ENCODE measurements at regions of chr7 and their contacts with region 1.

Region 1: GRCh38 chr7:26291699-26292538 is at the start of gene SNX10:
- DNase-seq: peak; percentile 90
- ATAC-seq: peak; percentile 78
- H3K4me3 ChIP-seq: peak within 1 kb of the TSS; percentile 89 to 96 (median 90)
- H3K4me3 Mint-ChIP-seq: peak within 1 kb of the TSS; percentile 94
- H3K27ac ChIP-seq: peak within 1 kb of the TSS; percentile 60 to 82
- H3K27ac Mint-ChIP-seq: peak within 1 kb of the TSS; percentile 96
- H3K4me1 ChIP-seq: peaks cover 42 to 50% of the 10 kb centered on the region in 2 donors
- H3K4me1 Mint-ChIP-seq: peaks cover 45% of the 10 kb centered on the region
- H3K27me3 ChIP-seq: no peaks in the 10 kb centered on the region
- H3K27me3 Mint-ChIP-seq: no peaks in the 10 kb centered on the region
- CTCF ChIP-seq: peak; percentile 46
- total RNA-seq, gene SNX10: 26.5 and 33.6 TPM in 2 replicates

Region 2: DNA sequence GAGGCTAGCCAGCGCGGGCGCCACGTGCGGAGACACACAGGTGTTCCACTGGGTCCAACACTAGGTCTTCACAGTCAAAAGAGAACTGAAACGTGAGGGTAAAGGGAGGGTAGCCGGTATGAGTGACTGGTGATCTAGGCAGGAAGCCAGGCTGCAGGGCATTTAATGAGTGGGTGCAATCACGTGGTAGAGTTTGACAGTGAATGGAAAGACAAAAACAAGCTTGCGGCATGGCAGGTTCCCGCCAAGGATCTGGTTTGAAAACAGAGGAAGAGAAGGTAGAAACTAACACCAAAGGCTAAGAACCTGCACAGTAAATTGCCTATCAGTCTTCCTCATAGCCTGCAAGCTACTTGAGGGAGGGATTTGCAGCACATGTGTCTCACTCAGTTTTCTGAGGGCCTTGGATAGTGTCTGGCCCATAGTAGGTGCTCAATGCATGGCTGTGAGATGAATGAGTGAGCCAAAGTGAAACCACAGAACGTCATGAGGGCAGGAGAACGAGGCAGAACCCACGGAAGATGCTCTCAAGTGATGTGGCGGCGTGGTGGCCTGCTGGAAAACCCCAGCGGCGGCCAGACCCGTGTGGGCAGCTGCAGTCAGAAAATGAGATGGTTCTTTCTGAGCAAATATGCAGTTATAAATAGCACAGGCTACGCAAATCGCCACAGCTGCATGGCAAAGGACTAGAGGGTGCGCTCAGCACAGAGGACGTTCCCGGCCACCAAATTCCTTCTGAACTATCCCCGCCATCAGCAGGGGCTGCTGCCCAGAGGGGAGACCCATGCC is 323.5 kb before region 1 on chr7:
- CTCF ChIA-PET with region 1: no interaction called
- POLR2A ChIA-PET with region 1: no interaction called
- intact Hi-C with region 1: loop called (anchors 5 kb)
- DNase-seq: peak; percentile 80
- ATAC-seq: peak; percentile 84
- H3K4me3 ChIP-seq: peak overlapping the region in 3 of 5 experiments; percentile 8 to 37 (median 28)
- H3K4me3 Mint-ChIP-seq: peak overlapping the region; percentile 78
- H3K27ac ChIP-seq: peak overlapping the region; percentile 57 to 75
- H3K27ac Mint-ChIP-seq: peak overlapping the region; percentile 83
- H3K4me1 ChIP-seq: peaks cover 30 to 42% of the 10 kb centered on the region in 2 donors
- H3K4me1 Mint-ChIP-seq: peaks cover 39% of the 10 kb centered on the region
- H3K27me3 ChIP-seq: peaks cover 0 to 23% (median 8%) of the 10 kb centered on the region in 4 experiments
- H3K27me3 Mint-ChIP-seq: peaks cover 16% of the 10 kb centered on the region
- CTCF ChIP-seq: no peak

Region 3: DNA sequence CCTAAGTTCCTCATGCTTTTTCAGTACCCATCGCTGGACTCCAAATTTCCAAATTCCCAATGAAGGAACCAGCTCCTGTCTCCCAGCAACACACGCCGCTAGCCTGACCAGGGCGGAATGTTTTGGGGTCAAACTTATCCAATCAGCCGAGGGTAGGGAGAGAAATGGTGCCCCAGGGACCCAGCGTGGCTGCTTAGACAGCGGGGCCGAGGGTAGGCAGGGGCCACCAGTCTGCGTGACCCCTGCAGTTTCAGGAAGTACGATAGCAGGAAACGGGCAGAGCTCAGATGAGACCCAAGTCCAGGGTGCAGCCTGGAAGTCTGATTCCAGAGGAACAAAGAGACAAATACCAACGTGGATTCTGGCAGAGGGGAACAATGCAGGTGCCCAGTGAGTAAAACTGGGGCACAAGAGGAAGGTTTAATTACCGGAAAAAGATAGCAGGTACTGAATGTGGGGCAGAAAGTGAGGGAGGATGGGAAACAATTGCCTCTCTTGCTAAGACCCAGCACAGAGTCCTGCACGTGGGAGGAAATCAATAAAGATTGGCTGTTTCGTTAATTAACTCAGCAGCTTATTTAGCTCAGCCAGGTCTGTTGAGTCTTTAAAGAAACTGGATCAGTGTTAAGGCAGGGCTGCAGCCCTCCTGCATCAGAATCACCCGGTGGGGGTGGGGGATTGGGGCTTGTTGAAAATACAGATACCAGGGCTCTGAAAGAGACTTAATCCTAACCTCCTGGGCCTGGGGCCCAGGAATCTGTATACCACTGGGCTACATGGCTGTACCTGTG is 190.4 kb before region 1 on chr7:
- CTCF ChIA-PET with region 1: no interaction called
- POLR2A ChIA-PET with region 1: no interaction called
- intact Hi-C with region 1: loop called (anchors 5 kb)
- DNase-seq: peak; percentile 62
- ATAC-seq: peak; percentile 64
- H3K4me3 ChIP-seq: peak overlapping the region; percentile 42 to 85 (median 75)
- H3K4me3 Mint-ChIP-seq: peak overlapping the region; percentile 99
- H3K27ac ChIP-seq: peak overlapping the region; percentile 43 to 77
- H3K27ac Mint-ChIP-seq: peak overlapping the region; percentile 96
- H3K4me1 ChIP-seq: peaks cover 30 to 48% of the 10 kb centered on the region in 2 donors
- H3K4me1 Mint-ChIP-seq: peaks cover 45% of the 10 kb centered on the region
- H3K27me3 ChIP-seq: no peaks in the 10 kb centered on the region
- H3K27me3 Mint-ChIP-seq: no peaks in the 10 kb centered on the region
- CTCF ChIP-seq: no peak

Region 4: GRCh38 chr7:26305463-26306273 is 13.7 kb after region 1 on chr7:
- CTCF ChIA-PET with region 1: interaction called, 14 read pairs
- POLR2A ChIA-PET with region 1: interaction called, 6 read pairs
- intact Hi-C with region 1: no loop called
- DNase-seq: peak; percentile 47
- ATAC-seq: peak; percentile 31
- H3K4me3 ChIP-seq: peak overlapping the region in 3 of 5 experiments; percentile 3 to 15 (median 6)
- H3K4me3 Mint-ChIP-seq: peak overlapping the region; percentile 53
- H3K27ac ChIP-seq: peak overlapping the region; percentile 69 to 86
- H3K27ac Mint-ChIP-seq: peak overlapping the region; percentile 81
- H3K4me1 ChIP-seq: peaks cover 17 to 43% of the 10 kb centered on the region in 2 donors
- H3K4me1 Mint-ChIP-seq: peaks cover 62% of the 10 kb centered on the region
- H3K27me3 ChIP-seq: no peaks in the 10 kb centered on the region
- H3K27me3 Mint-ChIP-seq: no peaks in the 10 kb centered on the region
- CTCF ChIP-seq: no peak

Region 5: DNA sequence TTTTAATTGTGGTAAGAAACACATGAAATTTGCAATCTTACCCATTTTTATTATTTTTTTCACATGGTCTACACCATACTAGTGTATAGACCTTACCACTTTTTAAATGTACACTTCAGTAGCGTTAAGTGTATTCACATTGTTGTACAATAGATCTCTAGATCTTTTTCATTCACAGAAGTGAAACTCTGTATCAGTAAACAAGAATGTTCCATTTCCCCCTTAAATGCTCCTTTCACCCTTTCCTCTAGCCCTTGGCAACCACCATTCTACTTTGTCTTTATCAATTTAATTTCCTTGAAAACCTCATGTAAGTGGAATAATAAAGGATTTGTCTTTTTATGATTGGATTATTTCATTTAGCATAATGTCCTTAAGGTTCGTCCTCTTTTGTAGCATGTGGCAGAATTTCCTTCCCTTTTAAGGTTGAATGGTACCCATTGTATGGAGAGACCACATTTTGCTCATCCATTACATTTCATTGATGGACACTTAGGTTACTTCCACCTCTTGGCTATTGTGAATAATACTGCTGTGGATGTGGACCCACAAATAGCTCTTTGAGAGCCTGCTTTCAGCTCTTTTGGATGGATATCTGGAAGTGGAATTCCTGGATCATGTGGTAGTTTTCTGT is 45.4 kb after region 1 on chr7:
- CTCF ChIA-PET with region 1: interaction called, 8 read pairs
- POLR2A ChIA-PET with region 1: interaction called, 3 read pairs
- intact Hi-C with region 1: loop called (anchors 1 kb)
- DNase-seq: peak; percentile 55
- ATAC-seq: peak; percentile 62
- H3K4me3 ChIP-seq: peak overlapping the region in 1 of 5 experiments; percentile 57
- H3K4me3 Mint-ChIP-seq: peak overlapping the region; percentile 78
- H3K27ac ChIP-seq: peak overlapping the region; percentile 36 to 68
- H3K27ac Mint-ChIP-seq: peak overlapping the region; percentile 91
- H3K4me1 ChIP-seq: peaks cover 70 to 80% of the 10 kb centered on the region in 2 donors
- H3K4me1 Mint-ChIP-seq: peaks cover 66% of the 10 kb centered on the region
- H3K27me3 ChIP-seq: no peaks in the 10 kb centered on the region
- H3K27me3 Mint-ChIP-seq: no peaks in the 10 kb centered on the region
- CTCF ChIP-seq: no peak

Region 6: DNA sequence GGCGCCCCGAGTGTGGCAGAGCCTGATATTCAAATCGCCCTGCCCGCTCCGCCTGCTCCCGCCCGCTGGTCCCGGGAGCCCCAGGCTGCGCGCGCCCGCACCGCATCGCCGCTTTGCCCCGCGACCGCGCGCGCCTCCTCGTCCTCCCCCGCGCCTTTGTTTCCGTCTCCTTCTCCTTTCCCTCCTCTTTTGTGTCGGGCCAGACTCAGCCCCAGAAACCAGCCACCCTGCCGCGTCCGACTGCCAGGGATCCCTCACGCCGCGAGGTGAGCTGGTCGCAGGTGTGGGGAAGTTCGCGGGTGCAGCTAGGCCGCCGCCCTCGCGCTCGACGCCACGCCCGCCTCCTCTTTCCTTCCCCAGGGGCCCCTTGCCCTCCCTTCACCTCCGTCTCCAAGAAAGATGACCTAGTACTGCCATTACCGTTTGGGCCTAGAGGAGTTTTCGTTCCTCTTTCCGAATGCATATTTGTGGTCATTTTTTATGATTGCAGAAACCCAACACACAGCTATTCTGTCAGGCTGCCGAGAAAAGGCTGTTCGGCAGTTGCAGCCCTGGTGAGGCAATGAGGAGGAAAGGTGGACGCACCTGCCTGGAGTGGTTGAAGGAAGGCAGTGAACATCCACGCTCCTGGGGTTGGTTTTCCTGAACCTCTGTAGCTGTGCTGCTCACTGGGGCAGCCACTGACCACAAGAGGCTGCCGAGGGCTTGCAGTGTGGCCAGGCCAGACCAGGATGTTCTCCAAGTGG is 107.0 kb after region 1 on chr7:
- CTCF ChIA-PET with region 1: no interaction called
- POLR2A ChIA-PET with region 1: interaction called, 3 read pairs
- intact Hi-C with region 1: loop called (anchors 1 kb)
- DNase-seq: peak; percentile 95
- ATAC-seq: peak; percentile 86
- H3K4me3 ChIP-seq: peak overlapping the region in 4 of 5 experiments; percentile 50 to 70 (median 64)
- H3K4me3 Mint-ChIP-seq: peak overlapping the region; percentile 99
- H3K27ac ChIP-seq: peak overlapping the region; percentile 79 to 81
- H3K27ac Mint-ChIP-seq: peak overlapping the region; percentile 100
- H3K4me1 ChIP-seq: peaks cover 20 to 28% of the 10 kb centered on the region in 2 donors
- H3K4me1 Mint-ChIP-seq: peaks cover 32% of the 10 kb centered on the region
- H3K27me3 ChIP-seq: peaks cover 0 to 8% (median 0%) of the 10 kb centered on the region in 4 experiments
- H3K27me3 Mint-ChIP-seq: peaks cover 3% of the 10 kb centered on the region
- CTCF ChIP-seq: no peak

Region 7: DNA sequence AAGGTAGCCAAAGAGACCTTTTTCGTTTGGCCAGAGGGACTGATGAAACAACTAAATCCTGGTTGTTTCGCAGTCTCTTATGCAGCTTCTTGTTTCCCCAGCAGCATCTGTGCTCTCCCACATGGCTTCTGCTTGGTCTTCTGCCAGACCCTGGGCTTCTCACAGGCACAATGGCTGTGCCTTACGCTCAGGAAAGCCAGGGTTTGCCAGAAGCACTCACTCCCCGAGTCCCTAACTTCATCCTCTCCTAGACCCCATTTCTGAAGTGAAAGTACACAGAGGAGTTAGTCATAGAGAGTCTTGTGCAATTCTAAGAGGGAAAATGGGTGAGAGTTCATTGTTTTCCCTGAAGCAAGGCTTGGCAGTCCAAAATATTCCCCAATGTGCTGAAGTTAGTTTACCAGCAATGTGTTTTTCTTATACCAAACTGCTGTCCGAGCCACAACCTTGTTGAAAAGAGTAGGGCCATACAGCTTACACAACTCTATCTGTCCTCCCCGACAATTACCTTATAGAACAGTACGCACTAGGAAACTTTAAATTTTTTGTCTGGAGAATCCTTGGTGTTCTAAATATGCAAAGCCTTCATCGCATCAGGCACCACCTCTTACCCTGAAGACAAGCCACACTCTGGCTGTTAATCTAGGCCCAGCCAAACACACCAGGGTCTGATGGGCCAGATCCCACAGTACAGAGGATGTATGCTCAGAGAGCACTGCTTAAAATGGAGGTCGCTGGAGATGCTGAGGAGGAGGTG is 1072.6 kb after region 1 on chr7:
- CTCF ChIA-PET with region 1: no interaction called
- POLR2A ChIA-PET with region 1: no interaction called
- intact Hi-C with region 1: no loop called
- DNase-seq: no peak
- ATAC-seq: no peak
- H3K4me3 ChIP-seq: no peak overlapping the region
- H3K4me3 Mint-ChIP-seq: no peak overlapping the region
- H3K27ac ChIP-seq: no peak overlapping the region
- H3K27ac Mint-ChIP-seq: no peak overlapping the region
- H3K4me1 ChIP-seq: no peaks in the 10 kb centered on the region
- H3K4me1 Mint-ChIP-seq: no peaks in the 10 kb centered on the region
- H3K27me3 ChIP-seq: peaks cover 0 to 2% (median 0%) of the 10 kb centered on the region in 4 experiments
- H3K27me3 Mint-ChIP-seq: peaks cover 5% of the 10 kb centered on the region
- CTCF ChIP-seq: no peak

Measured in B cell (primary cell).